ENCODE measurements at regions of chr18 and their contacts with region 1.

Region 1: DNA sequence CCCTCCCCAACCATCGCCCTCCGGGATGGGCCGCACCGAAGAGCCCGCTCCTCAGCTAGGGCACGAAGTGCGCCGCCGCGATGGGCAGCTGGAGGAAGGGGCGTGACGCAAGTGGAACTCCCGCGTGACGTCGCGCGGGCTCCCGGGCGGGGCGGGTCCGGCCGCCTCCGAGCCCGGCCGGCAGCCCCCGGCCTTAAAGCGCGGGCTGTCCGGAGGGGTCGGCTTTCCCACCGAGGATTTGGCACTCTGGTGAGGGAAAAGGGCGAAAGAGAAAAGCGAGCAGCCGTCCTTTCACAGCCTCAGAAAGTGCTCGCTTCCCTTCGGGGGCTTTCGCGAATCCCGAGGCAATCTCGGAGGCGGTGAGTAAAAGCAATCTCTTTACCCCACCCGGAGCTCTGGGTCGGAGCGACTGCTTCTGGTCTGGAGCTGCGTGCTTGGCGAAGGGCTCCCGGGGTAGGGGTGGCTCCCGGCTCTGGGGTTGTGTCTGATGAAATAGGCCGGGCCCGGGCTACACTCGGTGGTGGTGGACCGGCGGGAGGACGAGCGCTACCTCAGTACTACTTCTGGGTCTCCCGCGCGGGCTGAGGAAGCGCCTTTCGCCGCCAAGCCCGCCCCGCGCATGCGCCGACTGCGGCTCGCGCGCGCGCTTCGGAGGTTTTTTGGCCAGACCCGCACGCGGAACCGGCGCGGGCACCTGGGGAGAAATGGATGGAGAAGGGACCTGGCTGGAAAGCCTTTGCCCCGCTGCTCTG is at the start of gene RBBP8:
- DNase-seq: peak; percentile 85 to 89
- ATAC-seq: peak; percentile 97 to 98 (median 98)
- H3K4me3 ChIP-seq: peak within 1 kb of the TSS; percentile 71 to 98 (median 86)
- H3K27ac ChIP-seq: peak within 1 kb of the TSS; percentile 87 to 99 (median 96)
- H3K4me1 ChIP-seq: peaks cover 0 to 27% (median 11%) of the 10 kb centered on the region in 9 donors
- H3K27me3 ChIP-seq: no peaks in the 10 kb centered on the region
- CTCF ChIP-seq: no peak
- total RNA-seq, gene RBBP8: 4.0 to 13.5 (median 7.1) TPM

Region 2: GRCh38 chr18:22609642-22610041 is 323.7 kb before region 1 on chr18:
- intact Hi-C with region 1: loop called in 1 of 10 experiments (anchors 5 kb)
- DNase-seq: peak; percentile 66 to 86
- ATAC-seq: peak; percentile 47 to 84 (median 63)
- H3K4me3 ChIP-seq: no peak overlapping the region
- H3K27ac ChIP-seq: peak overlapping the region in 9 of 10 donors; percentile 1 to 79 (median 57)
- H3K4me1 ChIP-seq: peaks cover 0 to 60% (median 29%) of the 10 kb centered on the region in 9 donors
- H3K27me3 ChIP-seq: no peaks in the 10 kb centered on the region
- CTCF ChIP-seq: no peak

Region 3: DNA sequence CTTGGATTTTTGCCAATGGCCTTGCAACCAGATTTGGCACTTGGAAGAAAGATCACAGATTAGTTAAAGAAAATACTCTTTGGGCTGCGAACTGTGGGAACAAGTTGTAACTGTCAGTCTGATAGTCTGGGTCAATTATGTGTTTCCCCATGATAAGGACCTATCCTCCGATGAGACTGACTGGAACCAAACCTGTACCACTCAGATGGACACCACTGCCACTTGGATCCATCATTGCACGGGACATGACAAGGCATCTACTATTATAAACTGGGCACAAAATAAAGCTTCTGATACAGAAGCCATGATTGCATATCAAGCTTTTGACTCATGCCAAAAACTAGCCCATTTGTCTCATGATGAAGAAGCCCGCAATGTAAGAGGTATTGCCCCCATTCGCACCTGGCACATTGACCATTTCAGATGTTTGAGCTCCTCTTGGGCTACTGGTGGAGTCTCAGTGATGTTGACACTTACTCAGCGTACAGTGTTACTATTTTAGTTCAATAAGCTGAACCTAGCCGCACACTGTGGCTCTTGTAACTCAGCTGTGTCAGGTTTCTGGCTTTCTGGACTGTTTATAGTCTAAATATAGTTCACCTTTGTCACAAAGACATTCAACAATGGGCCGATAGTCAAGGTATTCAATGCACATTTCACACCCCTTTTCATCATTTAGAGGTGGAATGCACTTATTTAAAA is 180.1 kb before region 1 on chr18:
- intact Hi-C with region 1: no loop called
- DNase-seq: peak in 1 of 2 donors; percentile 40
- ATAC-seq: peak; percentile 79 to 99 (median 96)
- H3K4me3 ChIP-seq: no peak overlapping the region
- H3K27ac ChIP-seq: peak overlapping the region in 5 of 10 donors; percentile 43 to 67 (median 52)
- H3K4me1 ChIP-seq: peaks cover 0 to 15% (median 8%) of the 10 kb centered on the region in 9 donors
- H3K27me3 ChIP-seq: no peaks in the 10 kb centered on the region
- CTCF ChIP-seq: no peak

Region 4: DNA sequence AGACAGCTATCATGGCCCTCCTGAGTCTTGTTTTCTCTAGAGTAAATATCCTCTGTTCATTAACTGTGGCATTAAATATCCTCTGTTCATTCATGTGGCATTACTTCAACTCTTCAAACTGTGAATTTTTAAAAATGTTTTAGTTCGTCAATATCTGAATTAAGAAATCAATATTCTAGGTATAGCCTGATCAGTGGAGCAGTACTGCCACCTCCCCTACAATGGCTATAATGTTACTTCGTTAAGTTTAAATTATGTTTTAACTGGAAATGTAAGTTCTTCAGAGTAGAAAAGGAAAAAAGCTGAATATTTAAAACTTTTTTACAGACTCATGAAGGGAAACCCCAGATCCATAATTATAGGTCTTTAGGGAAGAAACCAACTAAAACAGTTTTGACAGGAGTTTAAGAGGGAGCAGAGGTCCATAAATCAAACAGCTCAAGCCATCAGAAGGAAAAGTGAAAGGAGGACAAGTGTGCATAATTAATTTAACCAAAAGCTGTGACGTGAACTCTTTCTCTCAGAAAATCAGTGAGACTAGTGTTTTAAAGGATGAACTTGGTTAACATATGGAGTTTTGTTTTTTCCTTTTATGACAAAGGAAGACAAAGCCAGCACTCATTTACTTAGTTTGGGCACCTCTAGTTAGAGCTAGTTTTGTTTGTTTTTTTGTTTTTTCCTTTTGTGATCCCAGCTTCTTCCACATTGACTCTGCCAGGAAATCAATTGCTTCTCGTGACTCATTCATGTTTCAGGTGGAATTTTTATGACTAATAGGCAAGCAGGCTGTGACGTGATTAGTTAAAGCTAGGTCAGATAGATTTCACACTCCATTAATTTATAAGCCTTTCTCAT is 44.7 kb after region 1 on chr18:
- intact Hi-C with region 1: loop called in 9 of 10 experiments (anchors 2 to 10 kb)
- DNase-seq: no peak
- ATAC-seq: peak in 1 of 8 donors; percentile 41
- H3K4me3 ChIP-seq: no peak overlapping the region
- H3K27ac ChIP-seq: peak overlapping the region in 1 of 10 donors; percentile 17
- H3K4me1 ChIP-seq: peaks cover 0 to 13% (median 0%) of the 10 kb centered on the region in 9 donors
- H3K27me3 ChIP-seq: no peaks in the 10 kb centered on the region
- CTCF ChIP-seq: no peak

Region 5: DNA sequence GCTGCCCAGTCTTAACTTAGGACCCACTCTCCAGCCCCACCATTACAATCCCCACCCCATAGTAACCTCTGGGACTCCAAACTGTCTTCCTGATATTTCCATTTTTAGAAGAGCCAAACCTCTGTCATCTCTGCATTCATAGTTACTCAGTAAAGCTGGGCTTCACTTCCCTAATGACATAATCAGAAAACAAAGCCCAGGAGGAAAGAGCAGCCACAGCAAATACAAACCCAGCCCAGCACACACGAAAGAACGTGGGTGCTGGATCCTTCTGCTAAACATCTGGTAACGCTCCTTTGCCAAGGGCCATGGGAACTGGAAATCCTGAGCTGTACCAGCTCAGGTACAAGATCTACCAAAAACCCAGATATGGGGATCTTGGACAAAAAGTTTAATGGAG is 482.9 kb after region 1 on chr18:
- intact Hi-C with region 1: loop called in 1 of 10 experiments (anchors 5 kb)
- DNase-seq: no peak
- ATAC-seq: peak in 7 of 8 donors; percentile 21 to 66 (median 31)
- H3K4me3 ChIP-seq: no peak overlapping the region
- H3K27ac ChIP-seq: peak overlapping the region in 2 of 10 donors; percentile 10 to 44
- H3K4me1 ChIP-seq: peaks cover 0 to 14% (median 0%) of the 10 kb centered on the region in 9 donors
- H3K27me3 ChIP-seq: no peaks in the 10 kb centered on the region
- CTCF ChIP-seq: no peak

Region 6: GRCh38 chr18:23452728-23453679 is 519.6 kb after region 1 on chr18 and contains the start of gene RIOK3:
- intact Hi-C with region 1: loop called in 1 of 10 experiments (anchors 5 kb)
- DNase-seq: peak; percentile 97 to 98
- ATAC-seq: peak; percentile 99
- H3K4me3 ChIP-seq: peak within 1 kb of the TSS; percentile 75 to 98 (median 92)
- H3K27ac ChIP-seq: peak within 1 kb of the TSS; percentile 52 to 96 (median 92)
- H3K4me1 ChIP-seq: peaks cover 7 to 57% (median 40%) of the 10 kb centered on the region in 9 donors
- H3K27me3 ChIP-seq: no peaks in the 10 kb centered on the region
- CTCF ChIP-seq: no peak
- total RNA-seq, gene RIOK3: 51.5 to 74.6 (median 63.5) TPM

Measured in heart right ventricle (tissue), 16 donors.